Endothelial cell of umbilical vein (primary cell): ENCODE measurements at regions of chr18 and their contacts with region 1.

Region 1: DNA sequence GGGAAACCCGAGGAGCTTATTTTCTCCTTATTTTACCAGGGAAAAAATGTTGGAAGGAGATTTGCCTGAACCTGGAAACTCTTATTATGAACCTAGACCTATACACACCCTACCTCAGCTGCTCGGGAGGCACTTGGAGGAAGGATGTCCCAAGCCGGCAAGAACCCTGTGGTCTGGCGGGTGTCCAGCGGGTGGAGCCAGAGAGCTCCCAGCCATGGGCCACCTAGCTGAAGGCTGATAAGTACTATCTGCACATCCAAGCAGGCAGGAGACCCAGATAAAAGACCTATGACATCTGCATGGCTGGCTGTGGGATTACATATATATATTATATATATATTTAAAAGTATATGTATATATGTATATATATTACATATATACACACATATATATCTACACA is 1.1 kb upstream of the SLC14A1 start:
- DNase-seq: peak; percentile 83
- H3K4me3 ChIP-seq: no peak overlapping the region
- H3K27ac ChIP-seq: no peak overlapping the region
- H3K4me1 ChIP-seq: no peaks in the 10 kb centered on the region
- H3K27me3 ChIP-seq: peaks cover 26 to 41% of the 10 kb centered on the region in 2 experiments
- CTCF ChIP-seq: peak; percentile 76 to 93
- POLR2A ChIP-seq: no peak

Region 2: GRCh38 chr18:45540125-45540524 is 182.8 kb before region 1 on chr18:
- CTCF ChIA-PET with region 1: no interaction called
- POLR2A ChIA-PET with region 1: no interaction called
- dilution Hi-C with region 1: no loop called
- intact Hi-C with region 1: no loop called
- DNase-seq: no peak
- H3K4me3 ChIP-seq: no peak overlapping the region
- H3K27ac ChIP-seq: no peak overlapping the region
- H3K4me1 ChIP-seq: no peaks in the 10 kb centered on the region
- H3K27me3 ChIP-seq: no peaks in the 10 kb centered on the region
- CTCF ChIP-seq: no peak
- POLR2A ChIP-seq: no peak

Region 3: DNA sequence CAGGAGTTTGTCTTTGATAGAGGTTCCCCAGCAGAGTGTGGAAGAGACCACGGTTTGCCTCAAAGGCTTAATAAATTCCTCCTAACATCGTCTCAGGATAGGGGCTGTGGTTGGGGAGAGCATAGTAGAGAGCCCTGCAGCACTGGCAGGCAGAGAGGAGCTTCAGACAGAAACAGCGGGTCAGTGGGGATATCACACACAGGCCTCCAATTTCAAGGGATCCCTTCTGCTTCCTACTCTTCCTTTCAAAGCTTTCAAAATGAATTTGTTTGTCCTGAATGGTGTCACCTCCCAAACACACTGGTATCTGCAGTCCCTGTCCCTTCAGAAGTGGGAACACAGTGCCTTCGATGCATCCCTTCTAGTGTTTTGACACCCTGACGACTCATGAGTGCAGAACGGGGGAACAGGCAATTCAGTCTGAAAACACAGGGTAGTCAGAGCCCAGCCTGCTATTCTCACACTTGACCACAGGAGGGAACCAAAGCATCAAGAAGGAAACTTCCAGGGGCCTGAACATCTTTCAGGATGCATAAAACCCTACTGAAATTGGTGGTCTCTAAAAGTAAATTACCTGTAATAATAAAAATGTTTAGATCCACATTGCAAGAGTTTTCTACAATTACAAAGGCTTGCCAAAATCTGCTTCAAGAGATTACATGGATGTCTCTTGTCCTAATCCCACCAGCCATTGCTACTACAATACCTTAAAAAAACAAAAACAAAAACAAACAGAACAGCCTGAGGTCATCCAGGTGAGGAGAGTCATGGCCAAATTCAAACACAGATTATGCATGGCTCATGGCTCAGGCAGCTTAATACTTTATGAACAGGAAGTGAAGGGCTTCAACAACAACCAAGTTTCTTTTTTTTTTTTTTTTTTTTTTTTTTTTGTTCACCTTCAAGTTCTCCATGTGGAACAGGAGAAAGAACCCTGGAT is 57.8 kb before region 1 on chr18:
- CTCF ChIA-PET with region 1: interaction called, 5 read pairs
- POLR2A ChIA-PET with region 1: no interaction called
- dilution Hi-C with region 1: no loop called
- intact Hi-C with region 1: loop called (anchors 2 kb)
- DNase-seq: peak; percentile 65
- H3K4me3 ChIP-seq: no peak overlapping the region
- H3K27ac ChIP-seq: no peak overlapping the region
- H3K4me1 ChIP-seq: peaks cover 5% of the 10 kb centered on the region
- H3K27me3 ChIP-seq: no peaks in the 10 kb centered on the region
- CTCF ChIP-seq: peak; percentile 75 to 78
- POLR2A ChIP-seq: no peak

Region 4: DNA sequence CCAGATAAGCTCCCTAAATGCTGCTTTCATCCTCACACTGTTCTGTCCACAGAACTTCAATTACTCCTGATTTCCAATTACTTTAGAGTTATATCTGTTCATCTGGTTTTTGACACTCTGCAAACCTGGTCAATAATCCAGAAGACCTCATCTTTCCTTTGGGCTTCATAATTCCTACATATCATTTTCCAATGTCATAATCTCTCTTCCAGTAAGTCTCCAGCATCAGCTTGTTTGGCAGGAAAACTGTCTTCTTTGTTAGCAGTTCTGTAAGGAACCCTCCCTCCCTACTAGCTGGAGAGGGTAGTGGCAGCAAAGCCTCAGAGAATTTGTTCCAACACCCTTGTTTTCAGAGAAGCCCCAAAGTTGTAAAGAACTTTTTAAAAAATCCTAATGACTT is 10.8 kb before region 1 on chr18:
- CTCF ChIA-PET with region 1: interaction called, 11 read pairs
- POLR2A ChIA-PET with region 1: no interaction called
- dilution Hi-C with region 1: no loop called
- intact Hi-C with region 1: no loop called
- DNase-seq: no peak
- H3K4me3 ChIP-seq: no peak overlapping the region
- H3K27ac ChIP-seq: no peak overlapping the region
- H3K4me1 ChIP-seq: no peaks in the 10 kb centered on the region
- H3K27me3 ChIP-seq: peaks cover 6 to 10% of the 10 kb centered on the region in 2 experiments
- CTCF ChIP-seq: no peak
- POLR2A ChIP-seq: no peak

Region 5: GRCh38 chr18:45755934-45756333 is 33.0 kb after region 1 on chr18:
- CTCF ChIA-PET with region 1: interaction called, 12 read pairs
- POLR2A ChIA-PET with region 1: no interaction called
- dilution Hi-C with region 1: no loop called
- intact Hi-C with region 1: loop called (anchors 1 kb)
- DNase-seq: peak; percentile 99
- H3K4me3 ChIP-seq: no peak overlapping the region
- H3K27ac ChIP-seq: no peak overlapping the region
- H3K4me1 ChIP-seq: peaks cover 26% of the 10 kb centered on the region
- H3K27me3 ChIP-seq: peaks cover 15 to 32% of the 10 kb centered on the region in 2 experiments
- CTCF ChIP-seq: no peak
- POLR2A ChIP-seq: no peak

Region 6: GRCh38 chr18:45775241-45775676 is 52.4 kb after region 1 on chr18:
- CTCF ChIA-PET with region 1: interaction called, 25 read pairs
- POLR2A ChIA-PET with region 1: no interaction called
- dilution Hi-C with region 1: no loop called
- intact Hi-C with region 1: no loop called
- DNase-seq: peak; percentile 89
- H3K4me3 ChIP-seq: peak overlapping the region; percentile 27 to 62 (median 55)
- H3K27ac ChIP-seq: peak overlapping the region; percentile 46
- H3K4me1 ChIP-seq: peaks cover 9% of the 10 kb centered on the region
- H3K27me3 ChIP-seq: peaks cover 3 to 16% of the 10 kb centered on the region in 2 experiments
- CTCF ChIP-seq: no peak
- POLR2A ChIP-seq: peak; percentile 80

Region 7: DNA sequence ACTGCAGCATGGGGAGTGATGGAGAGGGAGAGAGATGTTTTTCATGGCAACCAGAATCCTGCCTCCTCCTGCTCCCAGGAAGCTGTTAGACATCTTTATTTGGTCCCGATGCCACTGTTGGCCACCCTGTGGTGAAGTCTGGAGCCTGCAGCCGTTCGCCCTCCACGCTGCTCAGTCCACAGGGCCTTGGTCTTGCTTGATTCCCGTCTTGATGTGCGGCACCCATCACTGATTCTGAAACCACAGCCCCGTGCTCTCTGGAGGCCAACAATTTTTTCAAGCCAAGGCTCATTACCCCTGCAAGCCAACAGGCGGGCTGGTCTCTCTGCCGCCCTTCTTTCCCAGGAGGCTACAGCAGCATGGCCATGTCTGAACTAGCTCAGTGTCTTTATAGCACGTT is 127.1 kb after region 1 on chr18:
- CTCF ChIA-PET with region 1: interaction called, 15 read pairs
- POLR2A ChIA-PET with region 1: no interaction called
- dilution Hi-C with region 1: no loop called
- intact Hi-C with region 1: no loop called
- DNase-seq: no peak
- H3K4me3 ChIP-seq: no peak overlapping the region
- H3K27ac ChIP-seq: no peak overlapping the region
- H3K4me1 ChIP-seq: no peaks in the 10 kb centered on the region
- H3K27me3 ChIP-seq: no peaks in the 10 kb centered on the region
- CTCF ChIP-seq: peak; percentile 8 to 20
- POLR2A ChIP-seq: no peak